ENCODE measurements at regions of chr11 and their contacts with region 1.

Region 1: GRCh38 chr11:2305140-2305840 is 3.5 kb downstream of the TSPAN32 start:
- H3K4me3 ChIP-seq: no peak overlapping the region
- H3K27ac ChIP-seq: no peak overlapping the region
- H3K4me1 ChIP-seq: no peaks in the 10 kb centered on the region
- CTCF ChIP-seq: peak; percentile 82

Region 2: DNA sequence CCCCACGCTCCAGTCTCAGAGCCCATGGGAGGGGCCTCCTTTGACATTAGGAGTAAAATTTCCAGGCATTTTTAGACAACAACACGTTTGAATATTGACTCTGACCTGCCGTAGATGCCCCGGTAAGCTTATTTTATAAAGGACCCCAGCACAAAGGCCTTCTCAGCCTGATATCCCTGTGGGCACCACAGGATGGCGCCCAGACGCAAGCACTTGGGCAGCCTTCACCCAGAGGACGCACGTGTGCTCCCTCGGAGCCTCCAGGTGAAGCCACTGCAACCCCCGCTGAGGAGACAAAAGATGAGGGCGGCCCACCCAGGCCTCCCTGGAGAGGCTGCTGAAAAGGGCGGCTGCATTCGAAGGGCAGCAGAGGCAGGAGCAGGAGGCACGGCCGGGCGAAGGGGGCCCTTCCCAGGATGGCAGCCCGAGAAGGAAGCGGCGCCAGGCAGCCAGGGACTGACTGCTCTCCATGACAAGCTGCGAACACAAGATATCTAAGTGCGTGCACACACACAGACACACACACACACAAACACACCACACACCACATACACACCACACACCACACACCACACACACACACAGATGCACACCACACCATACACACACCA is 118.5 kb before region 1 on chr11:
- CTCF ChIA-PET with region 1: interaction called, 10 read pairs
- POLR2A ChIA-PET with region 1: no interaction called
- H3K4me3 ChIP-seq: no peak overlapping the region
- H3K27ac ChIP-seq: no peak overlapping the region
- H3K4me1 ChIP-seq: no peaks in the 10 kb centered on the region
- CTCF ChIP-seq: no peak

Region 3: DNA sequence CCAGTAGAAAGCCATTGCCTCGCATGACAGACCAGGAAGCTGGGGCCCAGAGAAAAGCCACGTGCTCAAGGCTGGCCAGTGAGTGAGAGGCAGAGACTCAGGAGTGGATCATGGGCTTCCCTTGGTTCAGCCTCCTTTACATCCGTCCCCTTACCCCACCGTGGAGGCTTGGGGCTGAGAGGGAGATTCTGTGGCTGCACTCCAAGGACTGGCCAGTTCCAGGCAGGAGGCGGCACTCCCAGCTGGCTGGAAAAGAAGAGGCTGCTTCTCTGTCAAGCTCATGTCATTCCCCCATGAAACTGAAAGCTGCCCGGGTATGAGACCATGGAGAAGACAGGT is 28.3 kb before region 1 on chr11:
- CTCF ChIA-PET with region 1: no interaction called
- POLR2A ChIA-PET with region 1: no interaction called
- H3K4me3 ChIP-seq: no peak overlapping the region
- H3K27ac ChIP-seq: no peak overlapping the region
- H3K4me1 ChIP-seq: no peaks in the 10 kb centered on the region
- CTCF ChIP-seq: no peak